GM18951 (cell line): ENCODE measurements at regions of chr9 and their contacts with region 1.

Region 1: GRCh38 chr9:84697509-84698114 is 28.1 kb downstream of the NTRK2 start:
- POLR2A ChIP-seq: no peak

Region 2: DNA sequence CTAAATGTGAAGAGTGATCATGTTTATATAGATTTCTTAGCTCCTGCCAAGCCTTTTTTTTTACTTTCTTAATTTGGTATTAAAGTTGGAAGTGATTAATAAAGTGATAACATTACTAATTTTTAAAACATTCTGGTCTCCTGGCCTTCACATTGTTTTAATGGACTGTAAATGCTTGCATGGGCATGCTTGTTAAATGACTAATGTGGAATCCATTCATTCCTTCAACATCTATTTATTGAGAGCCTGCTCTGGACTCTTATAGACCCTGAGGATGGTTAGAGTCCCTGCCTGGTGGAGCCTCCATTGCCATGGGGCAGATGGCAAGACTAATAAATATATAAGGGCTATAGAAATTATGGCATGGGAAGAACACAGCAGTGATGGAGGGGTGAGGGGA is 75.4 kb after region 1 on chr9:
- in situ Hi-C with region 1: loop called (anchors 10 kb)
- POLR2A ChIP-seq: no peak

Region 3: GRCh38 chr9:84953797-84954705 is 256.4 kb after region 1 on chr9:
- in situ Hi-C with region 1: loop called (anchors 25 kb)
- POLR2A ChIP-seq: no peak